Pancreas (tissue), 10 donors: ENCODE measurements at regions of chr15 and their contacts with region 1.

Region 1: GRCh38 chr15:44738340-44738984 is 2.1 kb downstream of the TRIM69 start:
- DNase-seq: no peak
- ATAC-seq: peak in 3 of 4 donors; percentile 75 to 85 (median 82)
- H3K4me3 ChIP-seq: no peak overlapping the region
- H3K27ac ChIP-seq: no peak overlapping the region
- H3K4me1 ChIP-seq: no peaks in the 10 kb centered on the region
- H3K27me3 ChIP-seq: no peaks in the 10 kb centered on the region
- CTCF ChIP-seq: peak; percentile 19 to 68 (median 46)

Region 2: DNA sequence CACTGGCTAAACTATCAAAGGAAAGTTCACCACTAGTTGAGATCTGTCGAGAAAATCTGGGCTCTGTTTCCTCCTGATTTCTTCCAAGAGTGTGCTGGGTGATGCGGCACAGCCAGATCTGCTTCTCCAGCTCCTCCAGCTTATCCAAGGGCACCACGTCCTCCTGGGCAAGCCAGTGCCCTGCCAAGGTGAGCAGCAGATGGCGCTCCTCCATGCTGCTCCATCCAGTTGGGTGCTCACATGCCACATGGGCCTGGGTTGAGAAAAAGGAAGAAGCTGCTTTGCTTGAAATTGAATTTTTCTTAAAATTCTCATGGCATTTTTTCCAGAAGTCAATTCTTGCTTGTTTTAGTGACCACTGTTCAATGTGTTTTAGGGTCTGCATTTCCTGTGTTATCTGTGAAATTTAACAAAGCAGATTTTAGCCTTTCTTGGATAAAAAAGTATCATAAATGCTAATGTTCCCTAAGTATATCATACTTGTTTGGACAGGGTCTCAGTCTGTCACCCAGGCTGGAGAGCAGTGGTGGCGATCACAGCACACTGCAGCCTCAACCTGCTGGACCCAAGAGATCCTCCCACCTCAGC is 154.2 kb before region 1 on chr15:
- intact Hi-C with region 1: loop called in 2 of 3 experiments (anchors 10 kb)
- DNase-seq: peak in 4 of 6 donors; percentile 34 to 70 (median 49)
- ATAC-seq: peak; percentile 61 to 87 (median 83)
- H3K4me3 ChIP-seq: no peak overlapping the region
- H3K27ac ChIP-seq: no peak overlapping the region
- H3K4me1 ChIP-seq: no peaks in the 10 kb centered on the region
- H3K27me3 ChIP-seq: no peaks in the 10 kb centered on the region
- CTCF ChIP-seq: no peak

Region 3: DNA sequence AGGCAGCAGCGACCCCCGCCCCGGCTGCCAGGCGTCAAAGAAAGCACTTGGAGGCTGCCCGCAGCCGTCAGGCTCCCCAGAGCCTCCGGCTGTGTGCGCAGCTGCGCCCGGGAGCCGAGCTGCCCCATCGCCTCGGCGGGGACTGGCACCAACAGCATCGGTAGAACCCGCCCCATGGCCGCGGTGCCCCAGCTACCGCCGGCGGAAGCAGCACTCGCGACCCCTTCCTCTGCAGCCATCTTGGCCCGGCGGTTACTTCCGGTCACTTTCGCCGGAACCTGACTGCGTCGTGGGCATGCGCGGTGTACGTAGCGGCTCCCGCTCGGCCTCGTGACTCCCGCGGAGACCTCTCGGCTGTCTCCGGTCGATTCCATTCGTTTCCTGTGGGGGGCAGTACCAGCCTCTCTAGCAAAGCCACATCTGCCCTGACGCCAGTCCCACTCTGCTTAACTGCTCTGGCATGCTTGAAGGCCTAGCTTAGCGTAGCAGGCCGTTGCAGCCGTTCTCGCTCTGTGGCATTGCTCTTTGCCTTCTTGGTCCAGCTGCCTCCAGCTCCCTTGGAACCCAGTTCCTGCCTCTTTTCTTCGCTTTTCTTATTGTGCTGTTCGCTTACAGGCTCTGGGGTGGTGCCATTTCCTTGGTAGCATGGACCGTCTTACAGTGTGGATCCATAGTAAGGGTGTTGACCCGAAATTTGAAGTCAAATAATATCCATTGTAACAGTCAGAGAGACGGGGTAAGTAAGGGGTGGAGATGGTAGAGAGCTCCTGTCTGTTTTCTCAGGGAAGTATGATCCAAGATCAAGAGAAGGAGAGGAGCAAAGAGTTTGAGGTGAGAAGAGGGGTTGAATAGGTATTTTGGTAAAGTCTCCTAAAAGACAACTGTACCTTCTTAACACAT is 74.8 kb before region 1 on chr15 and contains the start of gene SPG11:
- intact Hi-C with region 1: loop called in 1 of 3 experiments (anchors 10 kb)
- DNase-seq: peak; percentile 97 to 99 (median 98)
- ATAC-seq: peak; percentile 95 to 98 (median 98)
- H3K4me3 ChIP-seq: peak within 1 kb of the TSS; percentile 92 to 100 (median 95)
- H3K27ac ChIP-seq: peak within 1 kb of the TSS; percentile 96 to 98 (median 98)
- H3K4me1 ChIP-seq: peaks cover 6 to 14% (median 8%) of the 10 kb centered on the region in 3 donors
- H3K27me3 ChIP-seq: no peaks in the 10 kb centered on the region
- CTCF ChIP-seq: peak; percentile 92 to 96 (median 95)
- total RNA-seq, gene SPG11: 28.5 to 61.1 (median 38.0) TPM

Region 4: GRCh38 chr15:44676676-44677075 is 61.8 kb before region 1 on chr15:
- intact Hi-C with region 1: loop called in 1 of 3 experiments (anchors 10 kb)
- DNase-seq: no peak
- ATAC-seq: no peak
- H3K4me3 ChIP-seq: no peak overlapping the region
- H3K27ac ChIP-seq: no peak overlapping the region
- H3K4me1 ChIP-seq: no peaks in the 10 kb centered on the region
- H3K27me3 ChIP-seq: no peaks in the 10 kb centered on the region
- CTCF ChIP-seq: no peak